ENCODE measurements at regions of chr9 and their contacts with region 1.

Region 1: GRCh38 chr9:37408933-37409710 is 13.4 kb upstream of the GRHPR start:
- DNase-seq: peak; percentile 85
- ATAC-seq: peak; percentile 80
- H3K4me3 Mint-ChIP-seq: peak overlapping the region; percentile 75
- H3K27ac Mint-ChIP-seq: peak overlapping the region; percentile 98
- H3K4me1 Mint-ChIP-seq: peaks cover 92% of the 10 kb centered on the region
- H3K27me3 Mint-ChIP-seq: no peaks in the 10 kb centered on the region
- CTCF ChIP-seq: no peak

Region 2: GRCh38 chr9:36995927-36996705 is 413.0 kb before region 1 on chr9:
- CTCF ChIA-PET with region 1: no interaction called
- POLR2A ChIA-PET with region 1: interaction called, 8 read pairs
- intact Hi-C with region 1: loop called (anchors 1 kb)
- DNase-seq: peak; percentile 56
- ATAC-seq: peak; percentile 29
- H3K4me3 Mint-ChIP-seq: peak overlapping the region; percentile 47
- H3K27ac Mint-ChIP-seq: peak overlapping the region; percentile 97
- H3K4me1 Mint-ChIP-seq: peaks cover 96% of the 10 kb centered on the region
- H3K27me3 Mint-ChIP-seq: no peaks in the 10 kb centered on the region
- CTCF ChIP-seq: no peak

Region 3: GRCh38 chr9:37119907-37120842 is 288.9 kb before region 1 on chr9 and contains the start of gene ZCCHC7:
- CTCF ChIA-PET with region 1: no interaction called
- POLR2A ChIA-PET with region 1: interaction called, 4 read pairs
- intact Hi-C with region 1: loop called (anchors 5 kb)
- DNase-seq: peak; percentile 93
- ATAC-seq: peak; percentile 94
- H3K4me3 Mint-ChIP-seq: peak within 1 kb of the TSS; percentile 99
- H3K27ac Mint-ChIP-seq: peak within 1 kb of the TSS; percentile 96
- H3K4me1 Mint-ChIP-seq: peaks cover 46% of the 10 kb centered on the region
- H3K27me3 Mint-ChIP-seq: no peaks in the 10 kb centered on the region
- CTCF ChIP-seq: no peak
- total RNA-seq, gene ZCCHC7: 70.3 and 70.8 TPM in 2 replicates

Region 4: GRCh38 chr9:37324261-37324683 is 84.8 kb before region 1 on chr9:
- CTCF ChIA-PET with region 1: interaction called, 13 read pairs
- POLR2A ChIA-PET with region 1: interaction called, 19 read pairs
- intact Hi-C with region 1: loop called (anchors 1 kb)
- DNase-seq: peak; percentile 42
- ATAC-seq: peak; percentile 86
- H3K4me3 Mint-ChIP-seq: peak overlapping the region; percentile 59
- H3K27ac Mint-ChIP-seq: peak overlapping the region; percentile 99
- H3K4me1 Mint-ChIP-seq: peaks cover 69% of the 10 kb centered on the region
- H3K27me3 Mint-ChIP-seq: no peaks in the 10 kb centered on the region
- CTCF ChIP-seq: no peak

Region 5: GRCh38 chr9:37353791-37354190 is 55.3 kb before region 1 on chr9:
- CTCF ChIA-PET with region 1: no interaction called
- POLR2A ChIA-PET with region 1: no interaction called
- intact Hi-C with region 1: no loop called
- DNase-seq: no peak
- ATAC-seq: no peak
- H3K4me3 Mint-ChIP-seq: no peak overlapping the region
- H3K27ac Mint-ChIP-seq: peak overlapping the region; percentile 68
- H3K4me1 Mint-ChIP-seq: peaks cover 17% of the 10 kb centered on the region
- H3K27me3 Mint-ChIP-seq: no peaks in the 10 kb centered on the region
- CTCF ChIP-seq: no peak

Region 6: DNA sequence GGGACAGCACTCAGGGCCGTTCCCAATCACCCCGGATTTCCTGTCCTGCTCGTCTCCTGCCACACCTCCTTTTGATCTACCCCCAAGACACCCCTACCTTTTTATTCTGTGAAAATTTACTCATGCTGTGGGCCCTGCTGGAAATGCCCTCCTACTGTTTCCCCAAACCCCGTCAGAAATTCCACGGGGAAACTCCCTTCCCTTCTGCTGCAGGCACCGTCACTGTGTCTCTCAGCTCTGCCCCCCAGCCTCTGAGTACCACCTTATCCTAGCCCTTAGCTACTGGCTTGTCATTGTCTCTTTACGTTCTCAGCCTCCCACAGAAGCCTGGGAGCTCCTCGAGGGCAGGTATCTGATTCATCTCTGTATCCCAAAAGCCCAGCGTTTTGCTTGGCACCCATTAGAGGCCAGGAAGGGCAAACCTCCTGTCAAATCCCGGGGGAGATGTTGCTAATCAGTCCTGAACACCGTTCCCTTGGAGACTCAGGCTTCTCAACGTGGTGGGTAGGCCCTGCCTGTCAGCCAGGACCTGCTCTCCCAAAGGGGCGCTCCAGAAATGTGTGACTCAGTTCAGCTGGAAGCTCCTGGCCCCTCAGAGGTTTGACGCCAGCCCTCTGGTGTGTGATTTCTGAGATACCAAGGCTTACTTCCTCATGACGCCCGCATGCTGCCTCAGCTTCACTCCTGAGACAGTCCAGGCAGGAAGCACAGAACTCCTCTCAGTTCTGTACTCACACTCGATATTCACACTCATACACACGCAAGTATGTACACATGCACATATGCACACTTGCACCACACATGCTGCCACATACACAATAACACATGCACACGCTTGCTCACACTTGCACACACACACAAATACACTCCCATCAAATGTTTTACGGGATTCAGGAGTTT is 37.3 kb before region 1 on chr9:
- CTCF ChIA-PET with region 1: interaction called, 103 read pairs
- POLR2A ChIA-PET with region 1: interaction called, 975 read pairs
- intact Hi-C with region 1: loop called (anchors 1 kb)
- DNase-seq: peak; percentile 48
- ATAC-seq: peak; percentile 16
- H3K4me3 Mint-ChIP-seq: peak overlapping the region; percentile 57
- H3K27ac Mint-ChIP-seq: peak overlapping the region; percentile 100
- H3K4me1 Mint-ChIP-seq: peaks cover 91% of the 10 kb centered on the region
- H3K27me3 Mint-ChIP-seq: no peaks in the 10 kb centered on the region
- CTCF ChIP-seq: no peak

Region 7: GRCh38 chr9:37398464-37399025 is 10.6 kb before region 1 on chr9:
- CTCF ChIA-PET with region 1: interaction called, 10 read pairs
- POLR2A ChIA-PET with region 1: interaction called, 677 read pairs
- intact Hi-C with region 1: loop called (anchors 1 kb)
- DNase-seq: no peak
- ATAC-seq: no peak
- H3K4me3 Mint-ChIP-seq: peak overlapping the region; percentile 66
- H3K27ac Mint-ChIP-seq: peak overlapping the region; percentile 92
- H3K4me1 Mint-ChIP-seq: peaks cover 73% of the 10 kb centered on the region
- H3K27me3 Mint-ChIP-seq: no peaks in the 10 kb centered on the region
- CTCF ChIP-seq: no peak

Region 8: GRCh38 chr9:37617832-37618231 is 208.7 kb after region 1 on chr9:
- CTCF ChIA-PET with region 1: no interaction called
- POLR2A ChIA-PET with region 1: no interaction called
- intact Hi-C with region 1: no loop called
- DNase-seq: no peak
- ATAC-seq: no peak
- H3K4me3 Mint-ChIP-seq: no peak overlapping the region
- H3K27ac Mint-ChIP-seq: no peak overlapping the region
- H3K4me1 Mint-ChIP-seq: no peaks in the 10 kb centered on the region
- H3K27me3 Mint-ChIP-seq: no peaks in the 10 kb centered on the region
- CTCF ChIP-seq: no peak

Region 9: GRCh38 chr9:37827473-37828165 is 418.5 kb after region 1 on chr9:
- CTCF ChIA-PET with region 1: no interaction called
- POLR2A ChIA-PET with region 1: no interaction called
- intact Hi-C with region 1: no loop called
- DNase-seq: no peak
- ATAC-seq: no peak
- H3K4me3 Mint-ChIP-seq: no peak overlapping the region
- H3K27ac Mint-ChIP-seq: no peak overlapping the region
- H3K4me1 Mint-ChIP-seq: no peaks in the 10 kb centered on the region
- H3K27me3 Mint-ChIP-seq: no peaks in the 10 kb centered on the region
- CTCF ChIP-seq: no peak